ENCODE measurements at regions of chr3 and their contacts with region 1.

Region 1: DNA sequence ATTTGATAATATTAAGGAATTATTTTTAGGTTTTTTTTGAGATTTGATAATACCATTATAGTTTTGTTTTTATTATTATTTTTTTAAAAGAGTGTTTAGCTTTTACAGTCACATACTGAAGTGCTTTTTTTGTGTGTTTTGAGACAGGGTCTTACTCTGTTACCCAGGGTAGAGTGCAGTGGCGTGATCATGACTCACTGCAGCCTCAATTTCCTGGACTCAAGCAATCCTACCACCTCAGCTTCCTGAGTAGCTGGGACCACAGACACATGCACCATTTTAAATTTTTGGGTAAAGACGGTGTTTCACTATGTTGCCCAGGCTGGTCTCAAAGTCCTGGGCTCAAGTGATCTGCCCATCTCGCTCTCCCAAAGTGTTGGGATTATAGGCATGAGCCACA is 73.0 kb downstream of the SUMF1 start:
- DNase-seq: peak; percentile 66
- H3K4me3 Mint-ChIP-seq: no peak overlapping the region
- H3K27ac Mint-ChIP-seq: peak overlapping the region; percentile 90
- H3K4me1 Mint-ChIP-seq: peaks cover 47% of the 10 kb centered on the region
- H3K27me3 Mint-ChIP-seq: no peaks in the 10 kb centered on the region

Region 2: GRCh38 chr3:4409415-4409814 is 15.4 kb after region 1 on chr3:
- CTCF ChIA-PET with region 1: no interaction called
- POLR2A ChIA-PET with region 1: interaction called, 12 read pairs
- DNase-seq: peak; percentile 33
- H3K4me3 Mint-ChIP-seq: peak overlapping the region; percentile 53
- H3K27ac Mint-ChIP-seq: peak overlapping the region; percentile 91
- H3K4me1 Mint-ChIP-seq: peaks cover 51% of the 10 kb centered on the region
- H3K27me3 Mint-ChIP-seq: no peaks in the 10 kb centered on the region

Measured in activated CD4-positive, alpha-beta memory T cell treated with anti-CD3 and anti-CD28 coated beads, Interleukin-2, amount 10 ng/mL, durations not matched to agents 7 days and 5 days (primary cell).